Activated CD8-positive, alpha-beta memory T cell treated with anti-CD3 and anti-CD28 coated beads, Interleukin-2, amount 10 ng/mL, durations not matched to agents 7 days and 5 days (primary cell): ENCODE measurements at regions of chr1 and their contacts with region 1.

Region 1: GRCh38 chr1:109548321-109549267 is at the start of gene GNAI3:
- DNase-seq: peak; percentile 99
- ATAC-seq: peak; percentile 94
- H3K4me3 Mint-ChIP-seq: peak within 1 kb of the TSS; percentile 95
- H3K27ac Mint-ChIP-seq: peak within 1 kb of the TSS; percentile 98
- H3K4me1 Mint-ChIP-seq: peaks cover 35% of the 10 kb centered on the region
- H3K27me3 Mint-ChIP-seq: no peaks in the 10 kb centered on the region
- total RNA-seq, gene GNAI3: 7.5 to 8.3 TPM

Region 2: GRCh38 chr1:109493805-109494539 is 54.6 kb before region 1 on chr1 and contains the start of gene CYB561D1:
- CTCF ChIA-PET with region 1: interaction called, 22 read pairs
- DNase-seq: peak; percentile 92
- ATAC-seq: peak; percentile 92
- H3K4me3 Mint-ChIP-seq: peak within 1 kb of the TSS; percentile 99
- H3K27ac Mint-ChIP-seq: peak within 1 kb of the TSS; percentile 87
- H3K4me1 Mint-ChIP-seq: peaks cover 46% of the 10 kb centered on the region
- H3K27me3 Mint-ChIP-seq: no peaks in the 10 kb centered on the region
- total RNA-seq, gene CYB561D1: 11.0 to 15.0 TPM

Region 3: GRCh38 chr1:109509176-109510134 is 39.1 kb before region 1 on chr1 and contains the start of gene AMIGO1:
- CTCF ChIA-PET with region 1: no interaction called
- DNase-seq: peak; percentile 55
- ATAC-seq: peak; percentile 80
- H3K4me3 Mint-ChIP-seq: peak within 1 kb of the TSS; percentile 72
- H3K27ac Mint-ChIP-seq: no peak within 1 kb of the TSS
- H3K4me1 Mint-ChIP-seq: peaks cover 21% of the 10 kb centered on the region
- H3K27me3 Mint-ChIP-seq: peaks cover 36% of the 10 kb centered on the region
- total RNA-seq, gene AMIGO1: 0.20 to 0.26 TPM

Region 4: DNA sequence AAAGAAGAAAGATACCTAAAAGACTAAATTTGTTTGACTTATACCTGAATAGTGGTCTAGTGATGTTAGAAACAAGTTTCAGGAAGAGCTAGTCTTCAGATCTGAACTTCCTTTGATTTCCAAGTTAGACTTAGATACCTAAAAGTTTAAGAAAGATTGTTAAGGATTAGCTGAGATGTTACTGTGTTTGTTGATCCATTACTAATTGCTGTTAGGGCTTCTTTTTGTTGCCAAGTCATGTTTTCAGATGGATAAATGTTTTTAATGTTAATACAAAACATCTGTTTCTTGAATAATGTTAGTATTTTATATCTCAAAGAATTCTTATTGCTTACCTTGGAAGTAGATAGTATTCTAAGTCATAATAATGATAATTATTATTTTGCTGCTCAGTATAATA is 11.4 kb after region 1 on chr1:
- CTCF ChIA-PET with region 1: interaction called, 12 read pairs
- DNase-seq: no peak
- ATAC-seq: no peak
- H3K4me3 Mint-ChIP-seq: no peak overlapping the region
- H3K27ac Mint-ChIP-seq: no peak overlapping the region
- H3K4me1 Mint-ChIP-seq: peaks cover 26% of the 10 kb centered on the region
- H3K27me3 Mint-ChIP-seq: no peaks in the 10 kb centered on the region

Region 5: DNA sequence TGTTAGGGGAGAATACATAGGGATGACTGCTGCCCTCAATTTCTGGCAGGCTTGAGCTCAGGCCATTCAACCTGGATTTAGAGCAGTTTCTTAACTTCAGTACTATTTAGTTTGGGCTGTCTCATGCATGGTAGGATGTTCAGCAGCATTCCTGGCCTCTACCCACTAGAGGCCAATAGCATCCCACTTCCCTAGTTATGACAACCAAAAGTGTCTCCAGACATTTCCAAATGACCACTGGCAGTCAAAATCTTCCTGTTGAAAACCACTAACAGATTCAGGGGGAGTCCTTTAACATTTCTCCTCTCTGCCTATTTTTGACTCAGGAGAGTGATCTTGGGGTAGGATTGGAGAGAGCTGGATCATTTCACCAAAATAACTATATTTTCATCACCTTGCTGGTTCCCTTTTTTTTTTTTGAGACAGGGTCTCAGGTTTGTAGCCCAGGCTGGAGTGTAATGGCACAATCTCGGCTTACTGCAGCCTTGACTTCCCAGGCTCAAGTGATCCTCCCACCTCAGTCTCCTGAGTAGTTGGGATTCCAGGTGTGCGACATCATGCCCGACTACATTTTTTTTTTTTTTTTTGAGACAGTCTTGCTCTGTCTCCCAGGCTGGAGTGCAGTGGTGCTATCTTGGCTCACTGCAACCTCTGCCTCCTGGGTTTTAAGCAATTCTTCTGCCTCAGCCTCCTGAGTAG is 62.2 kb after region 1 on chr1:
- CTCF ChIA-PET with region 1: interaction called, 14 read pairs
- DNase-seq: no peak
- ATAC-seq: no peak
- H3K4me3 Mint-ChIP-seq: no peak overlapping the region
- H3K27ac Mint-ChIP-seq: no peak overlapping the region
- H3K4me1 Mint-ChIP-seq: peaks cover 2% of the 10 kb centered on the region
- H3K27me3 Mint-ChIP-seq: no peaks in the 10 kb centered on the region

Region 6: DNA sequence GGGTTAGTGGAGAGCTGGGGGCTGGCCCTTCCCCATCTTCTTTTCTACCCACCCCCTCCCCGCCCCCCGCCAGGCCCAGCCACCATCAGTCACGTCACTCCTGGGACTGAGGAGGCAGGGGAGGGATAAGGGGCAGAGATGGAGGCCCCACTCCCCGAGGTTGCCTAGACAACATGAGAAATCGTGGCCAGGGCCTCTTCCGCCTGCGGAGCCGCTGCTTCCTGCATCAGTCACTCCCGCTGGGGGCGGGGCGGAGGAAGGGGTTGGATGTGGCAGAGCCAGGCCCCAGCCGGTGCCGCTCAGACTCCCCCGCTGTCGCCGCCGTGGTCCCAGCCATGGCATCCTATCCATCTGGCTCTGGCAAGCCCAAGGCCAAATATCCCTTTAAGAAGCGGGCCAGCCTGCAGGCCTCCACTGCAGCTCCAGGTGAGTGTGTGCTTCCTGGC is 72.3 kb after region 1 on chr1:
- CTCF ChIA-PET with region 1: interaction called, 15 read pairs
- DNase-seq: peak; percentile 99
- ATAC-seq: peak; percentile 88
- H3K4me3 Mint-ChIP-seq: peak overlapping the region; percentile 99
- H3K27ac Mint-ChIP-seq: peak overlapping the region; percentile 98
- H3K4me1 Mint-ChIP-seq: peaks cover 63% of the 10 kb centered on the region
- H3K27me3 Mint-ChIP-seq: no peaks in the 10 kb centered on the region

Region 7: DNA sequence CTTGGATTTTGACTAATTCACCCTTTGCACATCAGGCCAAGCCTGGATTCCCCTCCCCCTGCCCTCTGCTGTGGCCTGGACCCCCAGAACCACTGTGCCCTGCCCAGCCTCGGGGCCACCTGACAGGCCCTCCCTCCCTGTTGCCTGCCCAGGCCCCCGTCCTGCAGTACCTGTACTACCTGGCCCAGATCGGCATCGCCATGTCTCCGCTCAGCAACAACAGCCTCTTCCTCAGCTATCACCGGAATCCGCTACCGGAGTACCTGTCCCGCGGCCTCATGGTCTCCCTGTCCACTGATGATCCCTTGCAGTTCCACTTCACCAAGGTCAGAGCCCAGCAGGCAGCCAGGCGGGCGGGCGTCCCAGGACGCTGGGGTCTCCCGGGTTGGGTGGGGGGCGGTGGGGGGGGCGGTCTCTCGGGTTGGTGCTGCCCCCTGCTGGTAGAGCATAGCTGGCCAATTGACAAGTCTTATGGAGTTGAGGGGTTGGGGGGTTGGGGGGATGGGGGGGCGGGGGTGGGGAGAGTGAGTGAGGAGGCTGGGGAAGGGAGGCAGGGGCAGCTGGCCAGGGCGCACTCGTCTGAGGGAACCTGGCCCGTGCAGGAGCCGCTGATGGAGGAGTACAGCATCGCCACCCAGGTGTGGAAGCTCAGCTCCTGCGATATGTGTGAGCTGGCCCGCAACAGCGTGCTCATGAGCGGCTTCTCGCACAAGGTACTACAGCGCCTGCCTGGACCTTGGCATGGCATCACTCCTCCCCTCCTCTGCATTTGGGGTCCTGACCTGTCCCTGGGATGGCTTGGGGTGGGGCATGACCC is 81.7 kb after region 1 on chr1:
- CTCF ChIA-PET with region 1: interaction called, 103 read pairs
- DNase-seq: peak; percentile 49
- ATAC-seq: no peak
- H3K4me3 Mint-ChIP-seq: no peak overlapping the region
- H3K27ac Mint-ChIP-seq: no peak overlapping the region
- H3K4me1 Mint-ChIP-seq: peaks cover 10% of the 10 kb centered on the region
- H3K27me3 Mint-ChIP-seq: no peaks in the 10 kb centered on the region

Region 8: GRCh38 chr1:109649491-109649914 is 100.9 kb after region 1 on chr1:
- CTCF ChIA-PET with region 1: interaction called, 18 read pairs
- DNase-seq: peak; percentile 21
- ATAC-seq: no peak
- H3K4me3 Mint-ChIP-seq: no peak overlapping the region
- H3K27ac Mint-ChIP-seq: no peak overlapping the region
- H3K4me1 Mint-ChIP-seq: peaks cover 7% of the 10 kb centered on the region
- H3K27me3 Mint-ChIP-seq: peaks cover 40% of the 10 kb centered on the region